Tibial artery (tissue), 4 donors: ENCODE measurements at regions of chr5 and their contacts with region 1.

Region 1: GRCh38 chr5:52693280-52693679 is 94.4 kb upstream of the ITGA1 start:
- DNase-seq: peak; percentile 41 to 66
- H3K4me3 ChIP-seq: no peak overlapping the region
- H3K27ac ChIP-seq: peak overlapping the region; percentile 62 to 71
- H3K4me1 ChIP-seq: peaks cover 0 to 72% (median 31%) of the 10 kb centered on the region in 4 donors
- H3K27me3 ChIP-seq: no peaks in the 10 kb centered on the region
- CTCF ChIP-seq: peak; percentile 55 to 59

Region 2: GRCh38 chr5:52787600-52788504 is 94.6 kb after region 1 on chr5 and contains the starts of genes ITGA1 and PELO:
- intact Hi-C with region 1: loop called (anchors 10 kb)
- DNase-seq: peak; percentile 90 to 92
- H3K4me3 ChIP-seq: peak within 1 kb of the TSS; percentile 66 to 86
- H3K27ac ChIP-seq: peak within 1 kb of the TSS; percentile 95 to 96
- H3K4me1 ChIP-seq: peaks cover 0 to 64% (median 7%) of the 10 kb centered on the region in 4 donors
- H3K27me3 ChIP-seq: no peaks in the 10 kb centered on the region
- CTCF ChIP-seq: peak; percentile 51 to 53

Region 3: DNA sequence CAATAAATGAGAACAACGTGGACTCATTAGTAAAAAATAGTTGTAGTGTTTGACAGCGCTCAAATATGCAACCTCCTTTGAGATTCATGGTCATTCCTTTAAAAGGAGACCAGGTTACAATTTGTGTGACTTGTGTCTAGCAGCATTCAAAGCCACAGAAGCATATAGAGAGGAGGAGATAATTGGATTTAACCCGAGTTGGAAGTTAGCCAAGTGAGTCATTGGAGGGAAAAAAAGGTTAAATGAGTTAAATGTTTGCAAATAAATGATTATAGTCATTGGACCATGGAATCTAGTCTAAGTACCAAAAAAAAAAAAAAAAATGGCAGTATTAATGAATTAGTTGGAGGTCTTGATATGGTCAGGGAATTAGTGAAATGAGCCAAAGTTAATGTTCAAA is 185.4 kb after region 1 on chr5:
- intact Hi-C with region 1: no loop called
- DNase-seq: no peak
- H3K4me3 ChIP-seq: no peak overlapping the region
- H3K27ac ChIP-seq: no peak overlapping the region
- H3K4me1 ChIP-seq: peaks cover 0 to 27% (median 4%) of the 10 kb centered on the region in 4 donors
- H3K27me3 ChIP-seq: no peaks in the 10 kb centered on the region
- CTCF ChIP-seq: no peak

Region 4: DNA sequence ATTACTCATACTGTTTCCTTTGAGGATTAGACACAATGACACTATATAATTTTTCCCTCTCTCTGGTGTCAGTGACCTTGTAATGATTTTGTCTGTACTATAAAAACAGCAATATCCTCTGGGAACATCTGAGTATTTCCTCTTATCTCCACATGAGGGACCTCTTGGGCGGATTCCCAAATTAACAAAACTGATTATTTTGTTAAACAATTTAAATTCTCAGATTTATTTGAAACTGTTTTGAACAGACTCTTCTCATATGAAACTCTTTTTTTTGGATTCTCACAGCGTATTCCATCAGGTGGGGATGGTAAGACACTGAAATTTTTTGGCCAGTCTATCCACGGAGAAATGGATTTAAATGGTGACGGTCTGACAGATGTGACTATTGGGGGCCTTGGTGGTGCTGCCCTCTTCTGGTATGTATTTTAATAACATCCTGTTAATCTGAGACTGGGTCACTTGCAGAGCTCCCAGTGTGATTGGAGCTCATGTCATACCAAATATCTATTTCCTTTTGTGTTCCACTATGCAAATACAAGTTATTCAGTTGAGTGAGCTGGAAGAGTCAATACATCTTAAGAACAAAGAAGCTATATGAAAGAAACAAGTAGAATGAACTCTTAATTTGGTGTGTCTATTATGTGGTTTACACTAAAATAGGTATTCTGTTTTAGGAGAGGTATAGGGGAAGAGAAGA is 222.0 kb after region 1 on chr5:
- intact Hi-C with region 1: loop called (anchors 10 kb)
- DNase-seq: no peak
- H3K4me3 ChIP-seq: peak overlapping the region; percentile 17 to 30
- H3K27ac ChIP-seq: peak overlapping the region; percentile 24 to 29
- H3K4me1 ChIP-seq: peaks cover 0 to 15% (median 4%) of the 10 kb centered on the region in 4 donors
- H3K27me3 ChIP-seq: no peaks in the 10 kb centered on the region
- CTCF ChIP-seq: peak; percentile 69 to 73